Caco-2 (cell line): ENCODE measurements at regions of chr1 and their contacts with region 1.

Region 1: GRCh38 chr1:181117638-181118449 is 29.3 kb downstream of the IER5 start:
- DNase-seq: peak; percentile 80 to 92
- H3K4me3 ChIP-seq: no peak overlapping the region
- H3K4me3 Mint-ChIP-seq: peak overlapping the region; percentile 43
- H3K27ac Mint-ChIP-seq: peak overlapping the region; percentile 95
- H3K4me1 ChIP-seq: peaks cover 60% of the 10 kb centered on the region
- H3K4me1 Mint-ChIP-seq: peaks cover 54% of the 10 kb centered on the region
- H3K27me3 ChIP-seq: no peaks in the 10 kb centered on the region
- H3K27me3 Mint-ChIP-seq: no peaks in the 10 kb centered on the region
- CTCF ChIP-seq: no peak

Region 2: DNA sequence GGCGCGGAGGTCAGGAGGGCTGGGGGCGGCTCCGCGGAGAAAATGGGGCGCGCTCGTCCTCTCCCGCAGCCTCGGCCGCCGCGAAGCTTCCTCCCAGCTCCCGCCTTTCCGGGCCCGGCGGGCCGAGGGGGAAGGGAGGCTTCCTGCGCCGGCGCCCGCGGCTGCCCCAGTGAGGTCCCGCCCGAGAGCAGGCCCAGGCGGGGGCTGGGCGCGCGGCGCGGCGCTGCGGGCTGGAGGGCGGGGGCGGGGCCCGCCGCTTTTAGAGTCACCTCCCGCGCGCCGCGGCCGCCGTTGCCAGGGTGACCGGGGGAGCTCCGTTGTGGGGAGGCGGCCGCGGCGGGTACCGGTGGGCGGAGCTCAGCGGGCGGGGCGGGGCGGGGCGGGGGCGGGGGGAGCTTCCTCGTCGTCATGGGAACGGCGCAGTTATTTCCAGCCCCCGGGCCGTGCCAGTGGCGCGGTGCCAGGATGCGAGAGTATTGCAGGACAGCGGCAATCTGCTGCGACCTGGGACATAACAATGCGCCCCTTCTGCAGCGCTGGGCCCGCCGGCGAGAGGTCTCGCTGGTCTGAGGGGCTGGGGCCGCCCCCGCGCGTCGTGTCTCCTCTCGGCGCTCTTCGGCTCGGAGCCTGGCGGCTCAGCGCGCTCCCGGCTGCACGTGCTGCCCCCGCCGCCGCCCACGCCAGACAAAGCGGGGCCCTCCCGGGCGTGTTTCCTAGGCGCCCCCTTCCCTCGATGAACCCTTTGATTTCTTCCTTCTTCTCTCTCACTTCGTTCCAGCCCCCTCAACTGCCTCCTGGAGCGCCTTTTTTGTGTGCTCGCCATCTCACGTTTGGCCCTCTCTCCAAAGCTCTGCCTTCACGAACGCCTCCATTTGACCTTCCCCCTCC is 12.5 kb before region 1 on chr1:
- CTCF ChIA-PET with region 1: interaction called, 9 read pairs
- POLR2A ChIA-PET with region 1: interaction called, 21 read pairs
- intact Hi-C with region 1: loop called (anchors 2 kb)
- DNase-seq: peak; percentile 93 to 94
- H3K4me3 ChIP-seq: peak overlapping the region; percentile 83
- H3K4me3 Mint-ChIP-seq: peak overlapping the region; percentile 76
- H3K27ac Mint-ChIP-seq: peak overlapping the region; percentile 86
- H3K4me1 ChIP-seq: peaks cover 51% of the 10 kb centered on the region
- H3K4me1 Mint-ChIP-seq: peaks cover 61% of the 10 kb centered on the region
- H3K27me3 ChIP-seq: no peaks in the 10 kb centered on the region
- H3K27me3 Mint-ChIP-seq: no peaks in the 10 kb centered on the region
- CTCF ChIP-seq: no peak

Region 3: GRCh38 chr1:181134543-181135362 is 16.9 kb after region 1 on chr1:
- CTCF ChIA-PET with region 1: interaction called, 3 read pairs
- POLR2A ChIA-PET with region 1: interaction called, 3 read pairs
- intact Hi-C with region 1: loop called (anchors 2 kb)
- DNase-seq: no peak
- H3K4me3 ChIP-seq: no peak overlapping the region
- H3K4me3 Mint-ChIP-seq: no peak overlapping the region
- H3K27ac Mint-ChIP-seq: no peak overlapping the region
- H3K4me1 ChIP-seq: peaks cover 25% of the 10 kb centered on the region
- H3K4me1 Mint-ChIP-seq: peaks cover 32% of the 10 kb centered on the region
- H3K27me3 ChIP-seq: no peaks in the 10 kb centered on the region
- H3K27me3 Mint-ChIP-seq: no peaks in the 10 kb centered on the region
- CTCF ChIP-seq: no peak